Posterior cingulate gyrus (tissue), 11 donors: ENCODE measurements at regions of chr5 and their contacts with region 1.

Region 1: DNA sequence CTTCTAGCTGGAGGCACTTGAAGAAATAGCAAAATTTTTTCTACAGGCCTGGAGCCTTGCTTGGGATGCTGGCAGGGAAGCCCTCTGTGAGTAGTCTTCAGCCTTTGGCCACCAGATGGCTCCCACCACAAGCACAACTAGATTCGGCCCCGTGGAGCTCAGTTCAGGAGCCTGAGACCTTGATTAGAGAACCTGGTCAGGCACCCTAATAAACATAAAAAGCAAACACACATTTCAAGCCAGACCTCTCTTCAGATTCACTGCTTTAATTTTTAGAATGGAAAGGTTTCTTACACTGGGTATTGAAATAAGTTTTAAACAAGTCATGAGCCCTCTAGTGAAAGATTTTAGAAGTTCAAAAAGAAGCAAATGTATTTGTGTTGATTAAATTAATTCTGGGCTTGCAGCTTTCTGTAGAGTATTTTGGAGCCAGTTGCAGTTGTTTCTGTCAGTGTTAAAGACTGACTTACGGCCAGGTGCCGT is 41.4 kb downstream of the GLRX start:
- DNase-seq: peak; percentile 40 to 95 (median 76)

Region 2: DNA sequence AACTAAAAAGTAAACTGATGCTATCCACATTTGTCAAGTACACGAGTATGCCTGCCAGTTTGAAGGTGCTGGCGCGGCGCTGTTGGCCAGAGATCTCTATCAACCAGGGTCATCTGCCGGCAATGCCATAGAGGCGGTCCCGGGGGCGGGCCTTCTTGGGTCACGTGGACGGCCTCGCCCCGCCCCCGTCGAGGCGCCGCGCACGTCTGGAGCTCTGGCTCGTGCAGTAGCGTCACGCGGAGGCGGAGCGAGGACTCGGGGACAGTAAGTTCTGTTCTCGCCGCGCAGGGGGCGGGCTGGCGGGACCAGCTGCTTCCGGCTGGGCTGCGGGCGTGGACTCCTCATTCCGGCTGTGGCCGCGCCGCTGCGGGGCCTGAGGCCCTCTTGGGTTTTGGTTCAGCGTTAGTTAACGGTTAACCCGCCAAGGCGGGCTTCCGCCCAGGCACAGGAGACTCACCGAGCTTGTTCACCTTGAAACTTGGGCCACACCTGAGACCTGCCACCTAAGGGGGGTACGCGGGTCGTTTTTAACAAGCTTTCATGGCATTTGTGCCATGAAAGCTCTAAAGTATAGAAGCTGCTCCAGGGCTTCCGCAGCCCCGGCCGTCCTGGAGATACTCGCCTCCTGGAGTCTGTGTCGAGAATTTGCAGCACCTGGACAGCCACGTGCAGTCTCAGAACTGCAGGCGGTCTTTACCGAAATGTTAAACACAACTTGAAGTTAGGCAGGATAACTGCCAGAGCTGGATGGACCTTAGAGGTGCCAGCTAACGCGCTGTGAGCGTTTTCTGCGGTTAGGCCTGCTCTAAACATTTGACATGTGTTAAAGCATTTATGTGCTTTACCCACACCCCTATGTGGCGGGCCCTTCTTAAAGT is 134.3 kb before region 1 on chr5 and contains the start of gene RFESD:
- intact Hi-C with region 1: loop called (anchors 2 kb)
- DNase-seq: peak; percentile 93 to 99 (median 96)

Region 3: DNA sequence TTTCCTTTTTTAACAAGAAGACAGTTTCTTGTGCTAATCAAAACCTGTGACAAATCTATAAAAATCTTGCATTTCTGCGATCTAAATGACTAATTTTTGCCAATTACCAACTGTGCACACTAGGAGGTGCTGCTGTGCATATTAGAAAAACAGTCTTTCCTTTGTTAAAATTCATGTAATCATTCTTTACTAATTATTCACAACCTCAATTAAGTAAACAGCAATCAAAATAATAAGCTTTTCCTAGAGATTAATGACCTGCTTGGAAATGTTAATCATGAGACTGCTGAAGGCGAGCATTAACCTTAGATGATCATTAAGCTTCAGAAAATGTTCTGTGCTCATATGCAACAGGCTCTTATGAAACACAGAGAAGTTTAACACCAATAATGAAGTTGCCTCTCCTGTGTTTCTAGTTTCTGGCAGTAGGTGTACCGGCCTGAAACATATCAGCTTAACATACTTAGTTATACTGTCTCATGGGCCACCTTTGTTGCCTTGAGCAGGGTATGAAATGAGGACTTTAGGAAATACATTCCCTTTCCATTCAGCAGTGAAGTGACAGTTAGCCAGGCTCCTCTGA is 116.8 kb before region 1 on chr5:
- intact Hi-C with region 1: loop called (anchors 5 kb)
- DNase-seq: peak in 1 of 10 donors; percentile 24

Region 4: GRCh38 chr5:95730730-95731570 is 50.2 kb before region 1 on chr5 and contains the start of gene RHOBTB3:
- intact Hi-C with region 1: loop called (anchors 5 kb)
- DNase-seq: peak; percentile 80 to 97 (median 86)

Region 5: DNA sequence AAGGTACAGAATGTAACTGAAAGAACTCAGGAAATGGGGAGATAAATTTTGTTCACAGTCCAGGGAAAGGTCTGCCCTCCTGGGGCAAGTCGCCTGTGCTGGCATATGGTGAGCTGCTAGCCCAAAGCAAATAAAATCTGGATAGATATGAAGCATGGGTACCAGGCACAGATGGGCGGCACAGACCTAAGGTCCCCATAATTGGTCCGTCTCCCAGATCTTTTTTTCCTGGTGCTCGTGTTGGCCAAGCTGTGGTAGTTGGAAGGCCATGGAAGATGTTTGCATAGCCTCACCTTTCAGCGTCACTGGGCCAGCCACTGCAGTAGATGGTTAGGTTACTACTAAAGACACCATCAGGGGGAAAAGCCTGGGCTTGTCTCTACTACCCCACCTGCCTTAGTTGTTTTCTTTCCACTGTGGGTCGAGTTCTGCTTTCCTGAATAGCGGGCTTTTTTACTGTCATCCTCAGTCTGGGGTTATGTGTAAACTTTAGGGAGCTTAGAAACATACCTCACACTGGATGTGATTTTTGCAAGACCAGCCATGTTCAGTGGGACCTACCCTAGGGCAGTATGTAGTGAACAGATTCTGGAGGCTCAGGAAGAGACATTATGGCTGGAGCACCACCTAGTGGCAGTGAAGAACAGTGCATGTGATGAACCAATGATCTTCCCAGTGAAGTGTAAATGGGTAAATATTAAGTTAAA is 65.6 kb after region 1 on chr5:
- intact Hi-C with region 1: loop called (anchors 1 kb)
- DNase-seq: peak in 8 of 10 donors; percentile 38 to 94 (median 76)